GM10248 (cell line): ENCODE measurements at regions of chr1 and their contacts with region 1.

Region 1: GRCh38 chr1:37822906-37823815 is 15.2 kb upstream of the YRDC start:
- DNase-seq: no peak
- CTCF ChIP-seq: no peak

Region 2: GRCh38 chr1:37807555-37808368 is 15.4 kb before region 1 on chr1 and contains the starts of genes C1orf122 and YRDC:
- CTCF ChIA-PET with region 1: interaction called, 11 read pairs
- POLR2A ChIA-PET with region 1: interaction called, 5 read pairs
- DNase-seq: peak; percentile 98
- CTCF ChIP-seq: no peak